ENCODE measurements at regions of chr5 and their contacts with region 1.

Region 1: DNA sequence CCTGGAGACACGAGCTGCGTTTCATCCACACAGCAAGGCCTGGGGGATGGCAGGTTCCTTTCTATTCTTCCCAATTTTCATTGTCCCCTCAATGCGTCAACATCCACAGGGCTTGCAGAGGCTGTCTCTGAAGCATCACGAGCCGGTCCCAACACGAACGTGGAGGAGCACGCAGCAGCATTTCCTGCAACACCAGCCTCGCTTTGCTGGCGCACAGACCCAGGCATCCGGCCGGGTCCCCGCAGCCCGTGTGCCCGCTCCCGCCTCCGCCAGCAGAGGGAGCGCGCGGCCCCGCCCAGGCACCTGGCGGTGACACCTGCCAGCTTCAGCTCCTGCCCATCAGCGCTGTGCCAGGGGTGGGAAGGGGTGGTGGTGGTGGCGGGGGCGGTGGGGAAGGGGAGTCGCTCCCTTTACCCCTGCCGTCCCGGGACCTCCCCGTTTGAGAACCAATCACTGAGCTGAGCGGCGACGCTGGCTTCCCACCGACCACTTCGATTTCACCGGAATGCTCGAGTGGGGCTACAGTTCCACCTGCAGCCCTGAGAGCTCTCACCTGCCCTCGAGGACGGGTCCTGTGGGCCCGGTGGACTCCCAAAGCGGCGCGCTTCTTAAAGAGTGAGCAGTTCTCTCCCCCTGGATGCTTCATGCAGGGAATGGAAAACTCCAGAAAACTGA is 464.5 kb downstream of the ICE1 start:
- DNase-seq: peak; percentile 41
- H3K4me3 Mint-ChIP-seq: no peak overlapping the region
- H3K27ac Mint-ChIP-seq: no peak overlapping the region
- H3K4me1 Mint-ChIP-seq: no peaks in the 10 kb centered on the region
- H3K27me3 Mint-ChIP-seq: no peaks in the 10 kb centered on the region

Region 2: DNA sequence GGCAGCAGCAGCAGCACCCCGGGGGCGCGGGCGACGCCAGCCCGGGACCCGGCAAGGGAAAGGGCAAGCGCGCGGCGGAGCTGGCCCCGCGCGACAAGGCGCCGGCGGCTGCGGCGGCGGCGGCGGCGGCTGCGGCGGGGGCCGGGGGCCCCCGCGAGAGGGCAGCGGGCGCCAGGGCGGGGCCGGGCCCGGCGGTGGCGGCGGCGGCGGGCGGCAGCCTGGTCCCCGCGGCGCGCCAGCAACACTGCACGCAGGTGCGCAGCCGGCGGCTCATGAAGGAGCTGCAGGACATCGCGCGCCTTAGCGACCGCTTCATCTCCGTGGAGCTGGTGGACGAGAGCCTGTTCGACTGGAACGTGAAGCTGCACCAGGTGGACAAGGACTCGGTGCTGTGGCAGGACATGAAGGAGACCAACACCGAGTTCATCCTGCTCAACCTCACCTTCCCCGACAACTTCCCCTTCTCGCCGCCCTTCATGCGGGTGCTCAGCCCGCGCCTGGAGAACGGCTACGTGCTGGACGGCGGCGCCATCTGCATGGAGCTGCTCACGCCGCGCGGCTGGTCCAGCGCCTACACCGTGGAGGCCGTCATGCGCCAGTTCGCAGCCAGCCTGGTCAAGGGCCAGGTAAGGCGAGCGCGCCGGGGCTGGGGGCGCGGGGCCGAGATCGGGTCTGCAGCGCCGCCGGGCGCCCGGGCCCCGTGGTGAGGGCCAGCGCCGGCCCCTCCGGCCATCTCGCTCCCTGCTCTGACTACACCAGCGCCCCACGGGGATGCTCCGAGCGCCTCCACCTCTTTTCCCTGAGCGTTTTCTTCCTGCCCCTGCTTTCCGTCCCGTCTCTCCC is 561.9 kb after region 1 on chr5 and contains the start of gene UBE2QL1:
- intact Hi-C with region 1: loop called (anchors 5 kb)
- DNase-seq: no peak
- H3K4me3 Mint-ChIP-seq: peak within 1 kb of the TSS; percentile 83
- H3K27ac Mint-ChIP-seq: peak within 1 kb of the TSS; percentile 67
- H3K4me1 Mint-ChIP-seq: peaks cover 5% of the 10 kb centered on the region
- H3K27me3 Mint-ChIP-seq: peaks cover 38% of the 10 kb centered on the region
- total RNA-seq, gene UBE2QL1: 0.73 and 0.91 TPM in 2 replicates